Activated CD8-positive, alpha-beta memory T cell treated with anti-CD3 and anti-CD28 coated beads, Interleukin-2, amount 10 ng/mL, durations not matched to agents 7 days and 5 days (primary cell): ENCODE measurements at regions of chr9 and their contacts with region 1.

Region 1: DNA sequence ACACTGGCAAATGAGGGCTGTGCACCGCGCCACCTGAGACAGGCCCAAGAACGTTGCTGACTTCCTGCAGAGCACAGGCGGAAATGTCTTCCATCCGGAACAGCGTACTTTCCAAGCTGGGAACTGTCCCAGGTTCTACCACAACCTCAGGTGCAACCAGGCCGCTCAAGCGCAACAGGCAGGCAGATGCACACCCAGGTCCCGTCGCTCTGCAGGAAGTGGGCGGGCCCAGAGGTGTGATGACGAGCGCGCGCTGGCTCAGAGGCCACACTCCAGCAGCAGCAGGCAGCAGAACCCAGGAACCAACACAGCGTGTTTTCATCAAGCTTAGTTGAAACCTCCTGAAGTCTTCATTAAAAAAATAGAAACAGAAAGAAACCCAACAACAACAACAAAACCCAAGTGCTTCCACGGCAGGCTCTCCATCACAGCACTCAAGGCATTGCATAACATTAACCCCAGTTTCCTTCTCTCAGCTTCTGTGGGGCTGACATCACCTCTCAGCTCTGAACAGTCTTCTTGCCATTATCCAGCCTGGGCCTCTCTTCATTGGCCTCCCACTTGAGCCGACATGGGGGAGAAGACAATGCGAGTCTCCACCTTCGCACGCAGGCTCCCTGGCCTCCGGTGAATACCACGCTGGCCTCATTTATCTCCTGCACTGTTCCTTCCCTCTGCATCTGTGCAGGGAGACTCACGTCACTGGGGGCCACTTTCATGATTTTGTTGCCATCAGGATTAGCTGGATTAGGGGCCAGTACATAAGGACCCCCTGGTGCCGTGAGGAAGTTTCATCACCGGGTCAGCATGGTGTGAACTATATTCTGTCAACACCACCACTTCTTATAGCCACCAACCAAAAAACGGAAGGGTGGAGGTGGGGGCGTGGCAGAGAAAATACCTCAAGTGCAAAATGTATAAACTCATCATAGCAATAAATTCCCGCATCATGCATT is 22.1 kb downstream of the PTCH1 start:
- DNase-seq: peak; percentile 91
- ATAC-seq: peak; percentile 98
- H3K4me3 Mint-ChIP-seq: peak overlapping the region; percentile 69
- H3K27ac Mint-ChIP-seq: peak overlapping the region; percentile 96
- H3K4me1 Mint-ChIP-seq: peaks cover 60% of the 10 kb centered on the region
- H3K27me3 Mint-ChIP-seq: peaks cover 9% of the 10 kb centered on the region

Region 2: GRCh38 chr9:95508968-95509850 is 14.5 kb after region 1 on chr9:
- CTCF ChIA-PET with region 1: interaction called, 14 read pairs
- DNase-seq: peak; percentile 89
- ATAC-seq: peak; percentile 52
- H3K4me3 Mint-ChIP-seq: peak overlapping the region; percentile 86
- H3K27ac Mint-ChIP-seq: peak overlapping the region; percentile 78
- H3K4me1 Mint-ChIP-seq: peaks cover 38% of the 10 kb centered on the region
- H3K27me3 Mint-ChIP-seq: peaks cover 49% of the 10 kb centered on the region

Region 3: DNA sequence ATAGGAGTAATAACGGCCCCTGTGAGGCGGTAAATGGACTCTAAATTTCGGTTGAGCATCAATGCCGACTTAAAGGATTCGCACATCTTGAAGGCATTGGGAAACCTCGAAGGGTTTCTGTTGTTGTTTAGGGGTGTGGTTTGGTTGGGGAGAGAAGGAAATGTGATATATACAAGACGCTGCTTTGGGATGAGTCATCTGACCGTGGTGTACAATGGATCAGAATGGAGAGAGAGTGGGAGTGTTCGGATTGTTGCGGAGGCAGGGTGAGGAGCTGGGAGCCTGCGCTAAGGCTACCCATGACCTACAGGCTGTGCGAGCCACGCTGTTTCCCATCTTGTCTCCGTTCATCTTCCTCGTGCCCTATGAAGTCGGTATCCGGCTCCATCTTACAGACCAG is 320.4 kb after region 1 on chr9:
- CTCF ChIA-PET with region 1: no interaction called
- DNase-seq: no peak
- ATAC-seq: no peak
- H3K4me3 Mint-ChIP-seq: no peak overlapping the region
- H3K27ac Mint-ChIP-seq: no peak overlapping the region
- H3K4me1 Mint-ChIP-seq: peaks cover 2% of the 10 kb centered on the region
- H3K27me3 Mint-ChIP-seq: peaks cover 5% of the 10 kb centered on the region